ENCODE measurements at regions of chr19 and their contacts with region 1.

Region 1: DNA sequence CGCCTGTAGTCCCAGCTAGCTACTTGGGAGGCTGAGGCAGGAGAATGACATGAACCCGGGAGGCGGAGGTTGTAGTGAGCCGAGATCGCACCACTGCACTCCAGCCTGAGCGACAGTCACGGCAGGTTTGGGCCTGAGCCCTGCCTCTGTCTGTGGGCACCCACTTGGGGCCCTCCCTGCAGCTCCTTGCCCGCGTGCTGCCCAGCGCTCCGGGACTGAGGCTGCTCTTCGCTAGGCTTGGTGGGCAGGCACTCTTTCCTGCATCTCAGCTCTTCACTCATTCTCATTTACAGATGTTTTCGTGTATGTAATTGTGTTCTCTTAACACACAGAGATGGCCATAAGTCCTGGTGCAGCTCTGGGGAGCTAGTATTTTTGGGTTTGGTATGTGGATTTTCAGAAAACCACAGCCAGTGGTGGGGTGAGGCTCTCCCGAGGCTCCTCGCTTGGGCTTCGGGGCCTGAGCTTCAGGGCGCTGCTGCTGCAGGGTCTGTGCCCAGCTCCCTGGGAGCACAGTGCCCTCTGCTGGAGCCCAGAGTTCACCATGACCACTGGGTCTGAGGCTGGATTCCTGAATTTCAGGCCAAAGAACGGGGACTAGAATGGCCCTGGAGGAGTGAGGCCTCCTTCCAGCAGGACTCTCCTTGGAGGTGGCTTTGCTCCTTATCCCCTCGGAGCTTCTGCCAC is 15.2 kb downstream of the UPF1 start:
- DNase-seq: peak; percentile 59
- H3K4me3 ChIP-seq: no peak overlapping the region
- H3K27ac ChIP-seq: no peak overlapping the region
- H3K4me1 ChIP-seq: peaks cover 56% of the 10 kb centered on the region
- H3K27me3 ChIP-seq: no peaks in the 10 kb centered on the region
- CTCF ChIP-seq: peak; percentile 91 to 96

Region 2: GRCh38 chr19:18594096-18594823 is 252.7 kb before region 1 on chr19:
- CTCF ChIA-PET with region 1: interaction called, 6 read pairs
- dilution Hi-C with region 1: no loop called
- in situ Hi-C with region 1: loop called in 1 of 2 experiments (anchors 10 kb)
- intact Hi-C with region 1: loop called (anchors 1 kb)
- DNase-seq: peak; percentile 62
- H3K4me3 ChIP-seq: peak overlapping the region; percentile 21 to 49 (median 34)
- H3K27ac ChIP-seq: no peak overlapping the region
- H3K4me1 ChIP-seq: peaks cover 21% of the 10 kb centered on the region
- H3K27me3 ChIP-seq: no peaks in the 10 kb centered on the region
- CTCF ChIP-seq: peak; percentile 63 to 64

Region 3: GRCh38 chr19:18675779-18676178 is 171.2 kb before region 1 on chr19:
- CTCF ChIA-PET with region 1: no interaction called
- dilution Hi-C with region 1: no loop called
- in situ Hi-C with region 1: no loop called
- intact Hi-C with region 1: loop called (anchors 5 kb)
- DNase-seq: no peak
- H3K4me3 ChIP-seq: no peak overlapping the region
- H3K27ac ChIP-seq: no peak overlapping the region
- H3K4me1 ChIP-seq: peaks cover 19% of the 10 kb centered on the region
- H3K27me3 ChIP-seq: no peaks in the 10 kb centered on the region
- CTCF ChIP-seq: peak; percentile 23 to 54

Region 4: DNA sequence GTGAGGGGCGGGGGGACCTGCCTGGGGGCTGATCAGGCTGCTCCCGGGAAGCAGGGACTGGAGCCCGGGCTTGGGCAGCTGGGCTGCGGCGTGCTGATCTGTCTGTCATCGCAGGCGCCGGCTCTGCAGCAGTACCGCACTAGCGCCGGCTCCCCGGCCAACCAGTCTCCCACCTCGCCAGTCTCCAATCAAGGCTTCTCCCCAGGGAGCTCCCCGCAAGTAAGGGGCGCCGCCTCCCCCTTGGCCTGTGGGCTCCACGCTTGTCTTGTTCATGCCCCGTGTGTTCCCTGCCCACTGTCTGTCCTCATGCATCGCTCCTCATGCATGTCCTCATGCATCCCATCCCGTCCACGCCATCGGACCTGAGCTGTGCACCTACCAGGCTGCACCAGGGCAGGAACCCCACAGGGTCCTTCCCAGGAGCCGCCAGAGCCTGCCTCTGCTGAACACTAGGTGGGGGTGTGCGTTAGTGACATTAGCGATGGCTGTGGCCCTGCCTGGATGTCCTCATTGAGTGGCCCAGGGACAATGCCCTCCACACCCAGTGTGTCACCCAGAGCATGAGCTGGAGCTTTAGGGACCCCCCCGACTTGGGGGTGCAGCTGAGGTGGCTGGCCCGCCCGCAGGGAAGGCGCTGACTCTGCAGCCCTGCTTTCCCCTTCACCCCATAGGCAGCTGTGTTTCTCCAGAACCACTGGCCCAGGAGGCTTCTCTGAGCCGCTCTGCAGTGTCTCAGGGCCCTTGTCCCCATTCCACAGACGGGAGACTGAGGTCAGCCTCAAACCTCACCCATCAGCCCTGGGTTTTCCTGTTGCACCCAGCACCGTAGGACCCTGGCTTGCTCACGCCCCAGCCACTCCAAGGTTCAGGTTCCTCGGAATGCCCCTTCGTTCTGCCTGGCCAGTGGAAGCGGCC is 75.4 kb before region 1 on chr19:
- CTCF ChIA-PET with region 1: interaction called, 11 read pairs
- dilution Hi-C with region 1: no loop called
- in situ Hi-C with region 1: no loop called
- intact Hi-C with region 1: loop called (anchors 1 kb)
- DNase-seq: no peak
- H3K4me3 ChIP-seq: no peak overlapping the region
- H3K27ac ChIP-seq: no peak overlapping the region
- H3K4me1 ChIP-seq: peaks cover 29% of the 10 kb centered on the region
- H3K27me3 ChIP-seq: no peaks in the 10 kb centered on the region
- CTCF ChIP-seq: peak in 1 of 2 donors; percentile 19

Region 5: GRCh38 chr19:18865973-18866799 is 19.2 kb after region 1 on chr19:
- CTCF ChIA-PET with region 1: no interaction called
- dilution Hi-C with region 1: no loop called
- in situ Hi-C with region 1: no loop called
- intact Hi-C with region 1: loop called (anchors 2 kb)
- DNase-seq: peak; percentile 39
- H3K4me3 ChIP-seq: no peak overlapping the region
- H3K27ac ChIP-seq: no peak overlapping the region
- H3K4me1 ChIP-seq: peaks cover 14% of the 10 kb centered on the region
- H3K27me3 ChIP-seq: no peaks in the 10 kb centered on the region
- CTCF ChIP-seq: peak; percentile 81 to 88

Region 6: GRCh38 chr19:18985257-18985656 is 138.3 kb after region 1 on chr19:
- CTCF ChIA-PET with region 1: interaction called, 3 read pairs
- dilution Hi-C with region 1: no loop called
- in situ Hi-C with region 1: no loop called
- intact Hi-C with region 1: loop called (anchors 1 kb)
- DNase-seq: no peak
- H3K4me3 ChIP-seq: no peak overlapping the region
- H3K27ac ChIP-seq: no peak overlapping the region
- H3K4me1 ChIP-seq: peaks cover 3% of the 10 kb centered on the region
- H3K27me3 ChIP-seq: peaks cover 1% of the 10 kb centered on the region
- CTCF ChIP-seq: no peak